ENCODE measurements at regions of chr9 and their contacts with region 1.

Region 1: GRCh38 chr9:89750147-89750861 is 145.5 kb downstream of the GADD45G start:
- DNase-seq: peak in 7 of 10 donors; percentile 17 to 49 (median 43)
- H3K4me3 ChIP-seq: no peak overlapping the region
- H3K27ac ChIP-seq: peak overlapping the region in 1 of 59 donors; percentile 18
- H3K27me3 ChIP-seq: peaks cover 0 to 6% (median 0%) of the 10 kb centered on the region in 45 donors
- CTCF ChIP-seq: peak in 1 of 56 donors; percentile 8

Region 2: GRCh38 chr9:89593695-89594427 is 156.4 kb before region 1 on chr9:
- intact Hi-C with region 1: no loop called
- DNase-seq: no peak
- H3K4me3 ChIP-seq: no peak overlapping the region
- H3K27ac ChIP-seq: no peak overlapping the region
- H3K27me3 ChIP-seq: no peaks in the 10 kb centered on the region
- CTCF ChIP-seq: peak in 51 of 56 donors; percentile 13 to 63 (median 39)

Region 3: DNA sequence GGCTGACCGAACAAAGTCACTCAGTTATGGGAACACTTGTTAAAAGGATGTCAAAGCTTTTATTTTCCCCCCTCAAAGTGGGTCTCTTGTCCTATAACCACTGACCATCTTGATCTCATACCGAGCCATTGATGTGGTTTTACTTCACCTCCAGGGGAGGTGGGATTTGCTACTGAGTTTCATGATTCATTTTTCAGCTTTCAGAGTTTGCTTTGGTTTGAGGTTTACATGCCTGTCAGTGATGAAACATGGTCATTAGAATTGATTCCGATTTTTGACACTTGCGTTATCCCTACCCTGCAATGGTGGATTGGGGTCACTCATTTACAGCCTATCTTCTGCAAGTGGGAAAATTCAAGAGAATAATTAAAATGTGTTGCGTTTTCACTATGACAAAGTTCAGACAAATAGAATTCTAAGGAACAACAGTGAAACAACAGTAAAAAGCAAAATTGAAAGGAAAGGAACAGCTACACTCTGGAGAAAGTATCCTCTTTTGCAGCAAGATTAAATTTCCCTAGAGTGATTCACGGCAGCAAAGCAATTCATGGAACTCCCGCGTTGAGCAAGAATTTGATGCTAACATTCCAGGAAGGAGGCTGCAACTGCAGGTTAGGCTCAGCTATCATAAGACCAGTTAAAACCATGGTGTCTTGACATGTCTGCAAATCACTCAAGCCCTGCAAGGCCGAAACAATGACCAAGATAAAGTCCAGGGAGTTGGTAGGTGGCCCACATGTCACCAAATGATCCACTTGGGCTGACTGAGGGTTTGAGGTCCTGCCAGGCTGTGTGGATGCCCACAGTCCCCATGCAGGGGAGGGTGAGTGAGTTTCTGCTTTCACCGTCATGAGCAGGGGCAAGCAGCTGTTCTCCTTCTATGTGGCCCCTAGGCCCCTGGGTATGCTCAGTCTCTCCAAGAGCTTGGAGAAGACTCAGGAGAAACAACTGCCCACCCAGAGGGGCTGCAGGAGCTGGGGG is 136.1 kb before region 1 on chr9:
- intact Hi-C with region 1: loop called in 1 of 2 experiments (anchors 5 kb)
- DNase-seq: no peak
- H3K4me3 ChIP-seq: no peak overlapping the region
- H3K27ac ChIP-seq: no peak overlapping the region
- H3K27me3 ChIP-seq: no peaks in the 10 kb centered on the region
- CTCF ChIP-seq: no peak

Region 4: DNA sequence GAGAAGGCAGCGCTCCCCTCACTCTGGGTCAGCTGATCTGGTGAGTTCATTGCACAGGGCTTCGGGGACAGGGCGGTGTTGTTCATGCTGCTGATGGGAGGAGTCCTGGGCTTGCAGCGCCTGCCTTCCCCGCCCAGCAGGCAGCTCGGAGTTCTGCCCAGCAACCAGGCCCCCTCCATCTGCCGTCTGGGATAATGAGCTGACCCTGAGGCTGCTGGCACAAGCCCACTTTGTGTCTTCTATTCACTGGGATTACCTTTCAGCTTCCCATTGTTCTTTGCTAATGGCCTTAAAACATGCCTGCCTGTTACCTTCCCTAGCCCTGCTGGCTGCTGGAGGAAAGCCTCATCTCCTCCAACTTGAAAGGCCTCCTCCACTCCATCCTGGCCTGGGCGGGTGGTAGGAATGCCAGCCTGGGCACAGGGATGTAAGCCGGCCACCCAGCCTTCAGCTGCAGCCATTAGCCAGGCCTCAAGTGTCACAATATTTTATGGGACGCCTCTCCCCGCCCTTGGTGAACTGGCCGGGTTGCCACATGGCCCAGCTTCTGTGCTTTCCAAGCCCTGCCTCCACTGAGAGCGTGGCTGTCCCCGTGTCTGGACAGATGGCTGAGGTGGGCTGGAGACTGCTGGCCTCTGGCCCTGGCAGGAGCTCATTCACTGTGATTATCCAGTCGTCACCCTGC is 75.1 kb before region 1 on chr9:
- intact Hi-C with region 1: loop called in 1 of 2 experiments (anchors 10 kb)
- DNase-seq: peak in 7 of 10 donors; percentile 49 to 80 (median 65)
- H3K4me3 ChIP-seq: peak overlapping the region in 2 of 59 donors; percentile 8 to 18
- H3K27ac ChIP-seq: peak overlapping the region in 36 of 59 donors; percentile 3 to 85 (median 66)
- H3K27me3 ChIP-seq: no peaks in the 10 kb centered on the region
- CTCF ChIP-seq: peak in 1 of 56 donors; percentile 4

Region 5: GRCh38 chr9:89814340-89815040 is 64.2 kb after region 1 on chr9:
- intact Hi-C with region 1: loop called in 1 of 2 experiments (anchors 5 kb)
- DNase-seq: peak in 2 of 10 donors; percentile 27 to 28
- H3K4me3 ChIP-seq: no peak overlapping the region
- H3K27ac ChIP-seq: no peak overlapping the region
- H3K27me3 ChIP-seq: no peaks in the 10 kb centered on the region
- CTCF ChIP-seq: peak in 16 of 56 donors; percentile 13 to 37 (median 24)